Lower lobe of right lung (tissue), 2 donors: ENCODE measurements at regions of chr6 and their contacts with region 1.

Region 1: GRCh38 chr6:11496152-11497060 is 41.1 kb upstream of the TMEM170B start:
- DNase-seq: no peak
- ATAC-seq: peak; percentile 92
- H3K4me3 ChIP-seq: no peak overlapping the region
- H3K27ac ChIP-seq: peak overlapping the region; percentile 59
- H3K4me1 ChIP-seq: peaks cover 23% of the 10 kb centered on the region
- H3K27me3 ChIP-seq: no peaks in the 10 kb centered on the region
- CTCF ChIP-seq: peak; percentile 92

Region 2: GRCh38 chr6:11144393-11144851 is 352.0 kb before region 1 on chr6:
- intact Hi-C with region 1: loop called (anchors 10 kb)
- DNase-seq: peak; percentile 82
- ATAC-seq: peak; percentile 92 to 97
- H3K4me3 ChIP-seq: no peak overlapping the region
- H3K27ac ChIP-seq: no peak overlapping the region
- H3K4me1 ChIP-seq: no peaks in the 10 kb centered on the region
- H3K27me3 ChIP-seq: no peaks in the 10 kb centered on the region
- CTCF ChIP-seq: peak; percentile 94